Endothelial cell of umbilical vein (primary cell): ENCODE measurements at regions of chr6 and their contacts with region 1.

Region 1: DNA sequence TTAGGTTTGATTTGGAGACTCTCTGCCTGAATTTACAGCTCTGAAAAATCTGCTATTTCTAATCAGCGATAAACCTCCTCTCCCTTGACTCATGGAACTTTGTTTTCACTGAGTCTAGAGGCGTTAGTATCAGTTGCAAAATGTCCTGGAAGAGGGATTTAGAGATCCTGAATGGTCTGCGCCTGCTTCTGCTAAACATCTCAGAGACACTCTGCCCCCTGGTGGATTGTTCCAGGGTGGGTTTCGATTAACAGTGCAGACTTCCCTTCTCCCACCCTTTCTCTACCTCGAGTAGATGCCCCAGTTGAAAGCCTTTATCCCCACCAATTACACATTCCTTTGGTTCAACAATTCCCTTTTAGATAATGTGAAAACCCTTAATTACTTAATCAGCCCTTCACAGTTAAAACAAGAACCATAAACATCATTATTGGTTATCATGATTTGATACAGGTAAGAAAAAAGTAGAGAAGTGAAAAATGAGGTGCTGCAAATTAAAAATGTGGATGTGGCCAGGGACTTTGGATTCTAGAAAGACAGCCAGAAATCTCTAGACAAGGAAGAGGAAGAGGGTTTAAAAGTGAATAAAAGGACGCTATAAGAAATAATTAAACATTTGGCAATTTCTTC is 5.5 kb downstream of the HTR1B start:
- DNase-seq: peak; percentile 93
- H3K4me3 ChIP-seq: peak overlapping the region in 1 of 3 experiments; percentile 14
- H3K27ac ChIP-seq: peak overlapping the region; percentile 85
- H3K4me1 ChIP-seq: peaks cover 46% of the 10 kb centered on the region
- H3K27me3 ChIP-seq: no peaks in the 10 kb centered on the region
- CTCF ChIP-seq: peak; percentile 71 to 81
- POLR2A ChIP-seq: no peak

Region 2: DNA sequence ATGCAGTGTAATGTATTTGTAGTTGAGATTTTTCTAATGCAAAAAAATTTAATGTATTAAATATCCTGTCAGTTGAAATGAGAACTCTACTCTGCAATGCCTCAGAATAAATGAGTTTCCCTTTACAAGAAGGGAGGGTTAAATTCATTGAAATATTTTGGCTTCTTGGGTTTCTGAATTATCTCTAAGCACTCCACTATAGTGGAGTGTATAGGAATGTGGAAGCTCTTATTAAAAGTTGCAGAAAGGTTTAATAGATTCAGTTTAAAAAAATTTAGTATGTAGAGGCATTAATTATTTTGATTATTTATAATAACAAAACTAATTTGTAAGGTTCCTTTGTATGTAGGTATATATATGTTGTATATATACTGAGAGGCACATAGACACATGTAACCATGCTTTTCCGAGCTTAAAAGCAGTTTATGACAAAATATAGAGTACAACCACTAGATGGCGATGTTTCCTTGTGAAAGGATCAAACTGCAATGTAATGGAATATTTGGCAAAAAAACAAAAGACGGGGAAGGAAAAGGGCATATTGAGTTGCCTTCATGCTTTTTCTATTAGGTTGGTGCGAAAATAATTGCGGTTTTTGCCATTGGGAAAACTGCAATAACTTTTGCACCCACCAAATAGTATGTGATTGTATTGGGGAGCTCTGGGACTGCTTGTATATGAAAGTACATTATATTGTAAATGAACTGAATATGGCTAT is 1564.6 kb before region 1 on chr6:
- CTCF ChIA-PET with region 1: interaction called, 22 read pairs
- POLR2A ChIA-PET with region 1: no interaction called
- dilution Hi-C with region 1: no loop called
- intact Hi-C with region 1: loop called (anchors 5 kb)
- DNase-seq: peak; percentile 81
- H3K4me3 ChIP-seq: no peak overlapping the region
- H3K27ac ChIP-seq: no peak overlapping the region
- H3K4me1 ChIP-seq: no peaks in the 10 kb centered on the region
- H3K27me3 ChIP-seq: no peaks in the 10 kb centered on the region
- CTCF ChIP-seq: peak; percentile 44 to 51
- POLR2A ChIP-seq: no peak

Region 3: GRCh38 chr6:76275746-76276145 is 1182.1 kb before region 1 on chr6:
- CTCF ChIA-PET with region 1: no interaction called
- POLR2A ChIA-PET with region 1: no interaction called
- dilution Hi-C with region 1: no loop called
- intact Hi-C with region 1: loop called (anchors 10 kb)
- DNase-seq: peak; percentile 1
- H3K4me3 ChIP-seq: no peak overlapping the region
- H3K27ac ChIP-seq: no peak overlapping the region
- H3K4me1 ChIP-seq: no peaks in the 10 kb centered on the region
- H3K27me3 ChIP-seq: no peaks in the 10 kb centered on the region
- CTCF ChIP-seq: peak in 1 of 2 donors; percentile 7
- POLR2A ChIP-seq: no peak

Region 4: DNA sequence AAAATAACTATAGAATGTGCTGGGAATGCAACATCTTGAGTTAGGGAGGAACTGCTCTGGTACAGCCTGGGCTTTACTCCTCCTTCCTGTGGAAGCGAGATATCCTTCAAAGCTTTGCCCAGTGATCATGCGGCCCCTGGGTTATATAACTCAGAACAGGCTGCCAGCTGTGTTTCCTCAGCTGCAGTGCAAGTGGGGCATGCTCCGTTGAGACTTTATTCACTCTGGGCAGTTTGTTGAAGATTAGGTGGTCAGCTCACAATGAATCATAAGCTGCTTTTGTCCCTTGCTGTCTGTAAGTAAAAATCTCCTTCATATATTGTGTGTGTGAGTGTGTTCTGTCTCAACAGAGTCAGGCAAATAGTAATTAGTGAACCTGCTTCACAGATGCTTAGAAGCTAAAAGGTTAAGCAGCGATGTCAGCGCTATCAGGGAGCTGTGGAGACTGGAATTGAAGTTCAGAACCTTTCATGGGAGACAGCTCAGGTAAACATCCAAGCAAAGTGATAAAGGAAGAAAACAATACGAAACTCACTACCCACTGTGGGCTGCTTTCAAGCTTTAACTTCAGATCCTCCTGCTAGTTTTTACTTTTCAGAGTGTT is 683.0 kb before region 1 on chr6:
- CTCF ChIA-PET with region 1: no interaction called
- POLR2A ChIA-PET with region 1: no interaction called
- dilution Hi-C with region 1: no loop called
- intact Hi-C with region 1: loop called (anchors 5 kb)
- DNase-seq: peak; percentile 84
- H3K4me3 ChIP-seq: no peak overlapping the region
- H3K27ac ChIP-seq: no peak overlapping the region
- H3K4me1 ChIP-seq: no peaks in the 10 kb centered on the region
- H3K27me3 ChIP-seq: no peaks in the 10 kb centered on the region
- CTCF ChIP-seq: no peak
- POLR2A ChIP-seq: no peak

Region 5: DNA sequence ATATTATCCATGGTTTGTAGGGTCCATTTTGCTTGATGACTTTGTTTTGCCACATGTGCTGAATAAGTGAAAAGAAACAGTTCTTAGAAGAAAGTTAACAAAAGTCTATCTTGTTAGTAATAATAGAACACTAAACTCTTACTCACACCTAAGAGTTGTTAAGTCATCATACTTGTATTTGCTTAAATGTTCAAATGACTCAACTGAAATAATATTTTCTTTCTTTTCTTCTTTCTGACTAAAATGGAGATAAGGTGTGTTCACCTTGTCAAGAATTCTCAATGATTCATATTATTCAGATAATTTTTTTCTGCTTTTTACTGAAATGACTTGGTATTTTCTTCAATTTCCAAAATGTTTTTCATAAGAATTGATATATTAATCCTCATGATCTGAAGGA is 321.7 kb before region 1 on chr6:
- CTCF ChIA-PET with region 1: no interaction called
- POLR2A ChIA-PET with region 1: no interaction called
- dilution Hi-C with region 1: no loop called
- intact Hi-C with region 1: loop called (anchors 2 kb)
- DNase-seq: peak; percentile 24
- H3K4me3 ChIP-seq: no peak overlapping the region
- H3K27ac ChIP-seq: peak overlapping the region; percentile 29
- H3K4me1 ChIP-seq: peaks cover 19% of the 10 kb centered on the region
- H3K27me3 ChIP-seq: no peaks in the 10 kb centered on the region
- CTCF ChIP-seq: no peak
- POLR2A ChIP-seq: no peak

Region 6: DNA sequence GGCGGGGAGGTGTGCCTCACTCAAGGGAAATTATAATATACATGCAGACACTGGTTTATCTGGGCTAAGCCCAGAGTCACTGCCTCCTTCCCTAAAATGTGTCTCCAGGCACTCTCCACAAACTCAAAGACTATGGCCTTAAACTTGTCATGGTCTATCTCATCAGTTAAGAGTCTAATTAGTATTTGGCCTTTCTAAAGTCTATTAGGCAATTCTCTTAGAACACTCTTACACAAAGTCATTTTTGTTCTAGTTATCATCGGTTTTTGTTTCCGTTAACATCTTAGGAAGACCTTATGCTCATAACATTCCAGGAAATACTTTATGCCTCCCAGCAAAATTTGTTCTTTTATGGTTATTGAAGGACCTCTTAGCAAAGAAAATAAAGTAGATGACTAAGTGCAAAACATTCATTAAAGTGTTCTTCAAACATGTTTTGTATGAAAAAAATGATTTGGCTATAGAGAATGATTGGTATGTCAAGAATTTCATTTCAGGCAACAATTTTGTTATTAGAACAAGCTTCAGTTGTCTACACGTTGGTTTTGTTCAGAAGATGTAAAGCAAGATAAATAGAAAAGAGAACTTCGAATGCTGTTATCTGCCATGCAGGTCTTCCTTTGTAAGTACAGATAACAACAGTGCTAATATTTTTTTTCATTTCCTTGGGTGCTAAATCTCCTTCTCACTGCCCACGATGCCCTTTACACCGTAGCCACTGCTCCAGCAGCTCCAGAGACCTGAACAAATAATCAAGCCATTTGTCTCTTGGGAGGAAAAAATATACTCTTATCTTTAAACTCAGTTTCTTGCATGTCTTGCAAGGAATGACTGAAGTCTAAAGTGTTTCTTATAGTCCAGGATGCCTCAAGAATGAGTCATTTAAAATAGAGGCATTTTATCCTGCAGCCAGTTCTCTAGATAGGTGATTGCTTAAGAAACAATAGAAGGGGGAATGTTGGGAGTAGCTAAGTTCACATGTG is 165.0 kb before region 1 on chr6:
- CTCF ChIA-PET with region 1: interaction called, 16 read pairs
- POLR2A ChIA-PET with region 1: interaction called, 14 read pairs
- dilution Hi-C with region 1: no loop called
- intact Hi-C with region 1: loop called (anchors 1 kb)
- DNase-seq: peak; percentile 97
- H3K4me3 ChIP-seq: no peak overlapping the region
- H3K27ac ChIP-seq: peak overlapping the region; percentile 90
- H3K4me1 ChIP-seq: peaks cover 61% of the 10 kb centered on the region
- H3K27me3 ChIP-seq: no peaks in the 10 kb centered on the region
- CTCF ChIP-seq: no peak
- POLR2A ChIP-seq: no peak

Region 7: DNA sequence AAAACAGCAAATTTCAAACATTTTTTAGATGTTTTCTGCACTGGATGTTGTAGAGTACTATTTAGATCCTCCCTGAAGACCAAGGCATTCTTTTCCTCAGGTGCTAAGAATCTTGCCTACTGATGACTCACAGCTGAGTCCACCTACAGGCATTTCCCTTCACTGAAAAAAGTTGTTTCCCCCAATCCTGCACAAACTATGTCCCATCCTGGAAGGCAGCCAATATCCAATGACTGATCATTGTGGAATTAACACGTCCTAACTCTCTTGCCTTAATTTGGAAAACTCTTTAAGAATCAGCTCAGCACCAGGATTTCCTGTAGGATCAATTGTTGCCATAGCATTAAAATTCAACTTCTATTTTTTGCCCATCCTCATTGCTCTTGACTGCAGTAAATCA is 1141.1 kb after region 1 on chr6:
- CTCF ChIA-PET with region 1: no interaction called
- POLR2A ChIA-PET with region 1: no interaction called
- dilution Hi-C with region 1: no loop called
- intact Hi-C with region 1: loop called (anchors 2 kb)
- DNase-seq: peak; percentile 100
- H3K4me3 ChIP-seq: no peak overlapping the region
- H3K27ac ChIP-seq: peak overlapping the region; percentile 100
- H3K4me1 ChIP-seq: peaks cover 81% of the 10 kb centered on the region
- H3K27me3 ChIP-seq: no peaks in the 10 kb centered on the region
- CTCF ChIP-seq: no peak
- POLR2A ChIP-seq: peak; percentile 71